Activated CD4-positive, alpha-beta memory T cell treated with anti-CD3 and anti-CD28 coated beads, Interleukin-2, amount 10 ng/mL, durations not matched to agents 7 days and 5 days (primary cell): ENCODE measurements at regions of chr7 and their contacts with region 1.

Region 1: GRCh38 chr7:151017953-151018420 is 6.3 kb downstream of the ATG9B start:
- DNase-seq: peak; percentile 82
- H3K4me3 Mint-ChIP-seq: peak overlapping the region; percentile 66
- H3K27ac Mint-ChIP-seq: no peak overlapping the region
- H3K4me1 Mint-ChIP-seq: peaks cover 61% of the 10 kb centered on the region
- H3K27me3 Mint-ChIP-seq: peaks cover 32% of the 10 kb centered on the region

Region 2: GRCh38 chr7:151068068-151068773 is 50.2 kb after region 1 on chr7:
- CTCF ChIA-PET with region 1: no interaction called
- POLR2A ChIA-PET with region 1: no interaction called
- DNase-seq: no peak
- H3K4me3 Mint-ChIP-seq: no peak overlapping the region
- H3K27ac Mint-ChIP-seq: no peak overlapping the region
- H3K4me1 Mint-ChIP-seq: no peaks in the 10 kb centered on the region
- H3K27me3 Mint-ChIP-seq: no peaks in the 10 kb centered on the region

Region 3: GRCh38 chr7:151110941-151111645 is 93.1 kb after region 1 on chr7:
- CTCF ChIA-PET with region 1: interaction called, 14 read pairs
- POLR2A ChIA-PET with region 1: interaction called, 4 read pairs
- DNase-seq: peak; percentile 78
- H3K4me3 Mint-ChIP-seq: no peak overlapping the region
- H3K27ac Mint-ChIP-seq: no peak overlapping the region
- H3K4me1 Mint-ChIP-seq: peaks cover 8% of the 10 kb centered on the region
- H3K27me3 Mint-ChIP-seq: peaks cover 11% of the 10 kb centered on the region

Region 4: GRCh38 chr7:151123822-151124464 is 106.0 kb after region 1 on chr7:
- CTCF ChIA-PET with region 1: no interaction called
- POLR2A ChIA-PET with region 1: no interaction called
- DNase-seq: peak; percentile 84
- H3K4me3 Mint-ChIP-seq: no peak overlapping the region
- H3K27ac Mint-ChIP-seq: no peak overlapping the region
- H3K4me1 Mint-ChIP-seq: peaks cover 3% of the 10 kb centered on the region
- H3K27me3 Mint-ChIP-seq: no peaks in the 10 kb centered on the region